ENCODE measurements at regions of chr12 and their contacts with region 1.

Region 1: DNA sequence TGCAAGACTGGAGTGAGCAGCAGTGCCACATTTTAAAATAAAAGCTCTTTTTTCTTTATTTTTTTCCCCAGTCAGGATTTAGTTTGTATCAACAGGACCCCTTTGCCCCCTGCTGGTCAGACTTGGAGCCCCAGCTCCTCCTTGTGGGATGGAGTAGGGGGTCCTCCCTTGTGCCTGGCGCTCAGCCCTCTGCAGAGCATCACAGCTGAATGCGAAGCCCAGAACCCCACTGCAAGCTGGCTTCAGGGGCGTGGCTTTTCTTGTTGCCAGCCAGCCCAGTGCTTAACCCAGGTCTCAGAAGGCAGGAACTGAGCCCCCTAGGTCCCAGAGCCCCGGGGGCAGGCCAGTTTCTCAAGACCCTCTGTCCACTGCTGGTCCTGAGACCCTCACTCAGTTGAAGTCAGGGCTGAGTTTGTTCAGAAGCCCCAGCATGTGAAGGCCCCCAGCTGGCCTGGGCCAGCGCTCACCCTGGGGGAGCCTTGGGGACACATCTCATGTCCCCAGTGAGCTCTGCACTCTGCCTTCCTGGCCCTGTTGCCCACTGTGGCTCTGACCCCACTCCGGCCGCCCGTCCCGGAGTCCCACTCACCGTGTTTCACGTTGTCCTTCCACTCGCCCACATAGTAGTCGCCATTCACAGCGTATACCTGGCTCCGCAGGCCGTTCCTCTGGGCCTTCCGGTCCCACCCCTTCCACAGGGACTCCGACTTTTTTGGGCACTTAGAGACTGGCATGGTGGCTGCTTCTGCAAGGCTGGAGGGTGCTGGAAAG is 519 bp downstream of the MORN3 start:
- DNase-seq: peak; percentile 68
- H3K4me3 Mint-ChIP-seq: no peak overlapping the region
- H3K27ac Mint-ChIP-seq: peak overlapping the region; percentile 62
- H3K4me1 Mint-ChIP-seq: peaks cover 51% of the 10 kb centered on the region
- H3K27me3 Mint-ChIP-seq: no peaks in the 10 kb centered on the region

Region 2: DNA sequence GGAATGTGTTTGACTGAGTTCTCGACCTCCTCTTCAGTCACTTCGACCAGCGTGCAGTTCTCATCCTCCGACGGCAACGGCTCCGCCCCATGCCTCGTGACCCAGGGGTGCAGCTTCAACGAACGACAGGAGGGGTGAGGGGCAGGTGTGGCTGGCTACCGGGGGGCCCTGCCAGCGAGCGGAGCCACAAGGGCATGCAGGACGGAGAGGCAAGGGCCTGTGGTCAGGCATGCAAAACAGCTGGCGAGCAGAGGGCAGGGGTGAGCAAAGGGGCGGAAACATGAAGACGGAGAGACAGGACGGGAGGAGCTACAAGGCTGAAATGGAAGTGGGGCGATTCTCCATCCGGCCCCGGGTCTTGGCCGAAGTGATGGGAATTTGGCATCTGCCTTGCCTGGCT is 420.3 kb before region 1 on chr12:
- CTCF ChIA-PET with region 1: no interaction called
- POLR2A ChIA-PET with region 1: no interaction called
- intact Hi-C with region 1: no loop called
- DNase-seq: no peak
- H3K4me3 Mint-ChIP-seq: no peak overlapping the region
- H3K27ac Mint-ChIP-seq: no peak overlapping the region
- H3K4me1 Mint-ChIP-seq: peaks cover under 1% of the 10 kb centered on the region
- H3K27me3 Mint-ChIP-seq: no peaks in the 10 kb centered on the region

Region 3: DNA sequence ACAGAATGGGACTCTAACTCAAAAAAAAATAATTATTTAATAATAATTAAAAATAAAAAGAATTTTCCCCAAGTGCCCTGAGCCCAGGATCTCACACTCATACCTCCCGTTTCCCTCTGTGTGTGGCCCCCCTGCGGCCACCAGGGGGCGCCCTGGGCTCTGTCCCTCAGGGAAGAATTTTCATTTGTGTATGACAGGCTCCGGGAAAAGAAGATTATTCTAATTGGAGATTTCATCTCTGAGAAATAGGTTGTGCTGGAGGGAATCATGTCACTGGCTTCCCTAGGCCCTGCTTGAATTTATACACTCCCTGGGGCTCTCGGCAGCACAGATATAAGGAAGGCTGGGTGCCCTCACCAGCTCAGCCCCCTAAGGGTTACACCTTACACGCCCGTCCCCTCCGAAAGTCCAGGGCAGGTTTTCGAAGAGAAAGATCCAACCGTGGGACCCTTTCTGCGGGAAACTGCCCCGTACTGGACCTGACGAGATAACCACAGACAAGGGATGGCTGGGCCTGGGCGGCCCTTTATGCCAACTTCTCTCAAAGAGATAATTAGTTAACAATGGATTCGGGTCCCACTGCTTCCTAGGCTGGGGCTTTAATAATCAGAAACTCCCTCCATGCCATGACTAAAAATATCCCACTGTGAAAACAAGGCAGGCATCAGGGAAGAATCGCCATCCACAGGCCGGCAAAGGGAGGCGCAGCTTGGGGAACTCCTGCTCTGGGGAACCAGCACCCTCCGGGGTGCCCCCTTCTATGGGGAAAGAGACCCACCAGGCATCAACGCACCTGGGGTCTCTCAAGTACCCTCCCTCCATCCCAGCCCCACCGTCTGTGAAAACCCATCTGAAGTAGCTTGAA is 168.8 kb before region 1 on chr12:
- CTCF ChIA-PET with region 1: interaction called, 38 read pairs
- POLR2A ChIA-PET with region 1: no interaction called
- intact Hi-C with region 1: no loop called
- DNase-seq: peak; percentile 79
- H3K4me3 Mint-ChIP-seq: no peak overlapping the region
- H3K27ac Mint-ChIP-seq: no peak overlapping the region
- H3K4me1 Mint-ChIP-seq: peaks cover 7% of the 10 kb centered on the region
- H3K27me3 Mint-ChIP-seq: no peaks in the 10 kb centered on the region

Region 4: DNA sequence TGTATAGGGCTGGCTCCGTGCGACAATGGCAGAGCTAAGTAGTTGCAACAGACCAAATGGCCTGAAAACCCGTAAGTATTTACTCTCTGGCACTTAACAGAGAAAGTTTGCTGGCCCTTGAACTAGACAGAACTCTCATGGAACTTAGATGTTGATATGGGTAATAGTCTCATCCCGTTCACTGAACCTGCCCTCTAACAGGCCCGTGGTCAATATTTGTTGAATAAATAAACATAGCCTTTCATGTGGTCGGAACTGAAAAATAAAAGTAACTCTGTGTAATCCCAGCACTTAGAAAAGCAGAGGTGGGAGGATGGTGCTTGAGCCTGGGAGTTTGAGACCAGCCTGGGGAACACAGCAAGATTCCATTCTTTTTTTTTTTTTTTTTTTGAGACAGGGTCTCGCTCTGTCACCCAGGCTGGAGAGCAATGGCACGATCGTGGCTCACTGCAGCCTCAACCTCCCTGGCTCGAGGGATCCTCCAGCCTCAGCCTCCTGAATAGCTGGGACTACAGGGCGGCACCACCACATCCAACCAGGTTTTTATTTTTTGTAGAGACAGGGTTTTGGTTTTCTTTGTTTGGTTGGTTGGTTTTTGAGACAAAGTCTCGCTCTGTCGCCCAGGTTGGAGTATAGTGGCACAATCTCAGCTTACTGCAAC is 117.8 kb before region 1 on chr12:
- CTCF ChIA-PET with region 1: interaction called, 68 read pairs
- POLR2A ChIA-PET with region 1: no interaction called
- intact Hi-C with region 1: no loop called
- DNase-seq: no peak
- H3K4me3 Mint-ChIP-seq: no peak overlapping the region
- H3K27ac Mint-ChIP-seq: no peak overlapping the region
- H3K4me1 Mint-ChIP-seq: peaks cover 5% of the 10 kb centered on the region
- H3K27me3 Mint-ChIP-seq: no peaks in the 10 kb centered on the region

Region 5: GRCh38 chr12:121657305-121658008 is 11.5 kb before region 1 on chr12:
- CTCF ChIA-PET with region 1: interaction called, 57 read pairs
- POLR2A ChIA-PET with region 1: interaction called, 11 read pairs
- intact Hi-C with region 1: loop called (anchors 1 kb)
- DNase-seq: peak; percentile 79
- H3K4me3 Mint-ChIP-seq: no peak overlapping the region
- H3K27ac Mint-ChIP-seq: peak overlapping the region; percentile 98
- H3K4me1 Mint-ChIP-seq: peaks cover 52% of the 10 kb centered on the region
- H3K27me3 Mint-ChIP-seq: no peaks in the 10 kb centered on the region

Region 6: GRCh38 chr12:121688966-121689365 is 20.0 kb after region 1 on chr12:
- CTCF ChIA-PET with region 1: interaction called, 11 read pairs
- POLR2A ChIA-PET with region 1: interaction called, 5 read pairs
- intact Hi-C with region 1: loop called (anchors 2 kb)
- DNase-seq: no peak
- H3K4me3 Mint-ChIP-seq: no peak overlapping the region
- H3K27ac Mint-ChIP-seq: no peak overlapping the region
- H3K4me1 Mint-ChIP-seq: peaks cover 6% of the 10 kb centered on the region
- H3K27me3 Mint-ChIP-seq: no peaks in the 10 kb centered on the region